CD4-positive, alpha-beta memory T cell (primary cell): ENCODE measurements at regions of chr10 and their contacts with region 1.

Region 1: DNA sequence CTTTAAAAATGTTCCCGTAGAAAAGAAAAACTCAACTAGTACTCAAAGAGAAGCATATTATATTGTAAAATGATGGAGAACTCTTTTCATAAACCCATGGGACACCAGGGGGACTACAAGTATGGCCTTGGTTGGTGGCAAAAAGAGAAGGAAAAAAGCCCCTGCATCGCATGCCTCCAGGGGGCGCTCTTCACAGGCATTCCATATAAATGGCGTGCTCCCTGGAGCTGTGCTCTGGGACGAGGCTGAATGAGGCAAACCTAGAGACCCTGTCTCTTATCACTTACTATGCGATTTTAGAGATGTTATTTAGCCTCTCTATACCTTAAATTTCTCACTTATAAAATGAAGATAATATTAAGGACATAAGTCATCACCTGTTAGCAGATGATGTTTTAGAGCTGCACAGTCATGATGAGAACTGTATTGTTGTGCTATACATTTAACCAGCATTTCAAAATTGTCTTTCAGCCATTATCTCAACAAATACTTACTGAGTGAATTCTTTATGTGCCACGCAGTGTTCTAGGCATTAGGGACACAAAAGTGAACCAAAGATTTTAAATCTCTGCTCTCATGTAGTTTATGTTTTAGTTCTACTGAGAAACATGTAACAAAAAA is 105.8 kb downstream of the ARHGAP21 start:
- DNase-seq: peak; percentile 32 to 47 (median 39)
- H3K4me3 ChIP-seq: no peak overlapping the region
- H3K4me3 Mint-ChIP-seq: no peak overlapping the region
- H3K27ac ChIP-seq: no peak overlapping the region
- H3K27ac Mint-ChIP-seq: peak overlapping the region in 2 of 7 donors; percentile 5 to 47
- H3K4me1 ChIP-seq: peaks cover 13% of the 10 kb centered on the region
- H3K4me1 Mint-ChIP-seq: peaks cover 16 to 31% (median 23%) of the 10 kb centered on the region in 4 donors
- H3K27me3 ChIP-seq: no peaks in the 10 kb centered on the region
- H3K27me3 Mint-ChIP-seq: no peaks in the 10 kb centered on the region

Region 2: GRCh38 chr10:24597426-24597825 is 20.5 kb before region 1 on chr10:
- CTCF ChIA-PET with region 1: interaction called, 16 read pairs
- POLR2A ChIA-PET with region 1: no interaction called
- intact Hi-C with region 1: no loop called
- DNase-seq: no peak
- H3K4me3 ChIP-seq: no peak overlapping the region
- H3K4me3 Mint-ChIP-seq: no peak overlapping the region
- H3K27ac ChIP-seq: no peak overlapping the region
- H3K27ac Mint-ChIP-seq: no peak overlapping the region
- H3K4me1 ChIP-seq: no peaks in the 10 kb centered on the region
- H3K4me1 Mint-ChIP-seq: peaks cover 2 to 5% (median 3%) of the 10 kb centered on the region in 4 donors
- H3K27me3 ChIP-seq: no peaks in the 10 kb centered on the region
- H3K27me3 Mint-ChIP-seq: no peaks in the 10 kb centered on the region

Region 3: GRCh38 chr10:24603333-24603732 is 14.5 kb before region 1 on chr10:
- CTCF ChIA-PET with region 1: interaction called, 22 read pairs
- POLR2A ChIA-PET with region 1: interaction called, 3 read pairs
- intact Hi-C with region 1: no loop called
- DNase-seq: no peak
- H3K4me3 ChIP-seq: no peak overlapping the region
- H3K4me3 Mint-ChIP-seq: no peak overlapping the region
- H3K27ac ChIP-seq: no peak overlapping the region
- H3K27ac Mint-ChIP-seq: peak overlapping the region in 2 of 7 donors; percentile 39 to 60
- H3K4me1 ChIP-seq: no peaks in the 10 kb centered on the region
- H3K4me1 Mint-ChIP-seq: peaks cover 2 to 8% (median 4%) of the 10 kb centered on the region in 4 donors
- H3K27me3 ChIP-seq: no peaks in the 10 kb centered on the region
- H3K27me3 Mint-ChIP-seq: no peaks in the 10 kb centered on the region

Region 4: GRCh38 chr10:25080880-25081581 is 463.1 kb after region 1 on chr10:
- CTCF ChIA-PET with region 1: interaction called, 70 read pairs
- POLR2A ChIA-PET with region 1: no interaction called
- intact Hi-C with region 1: loop called (anchors 1 kb)
- DNase-seq: peak in 4 of 5 donors; percentile 40 to 58 (median 48)
- H3K4me3 ChIP-seq: no peak overlapping the region
- H3K4me3 Mint-ChIP-seq: no peak overlapping the region
- H3K27ac ChIP-seq: no peak overlapping the region
- H3K27ac Mint-ChIP-seq: peak overlapping the region in 3 of 7 donors; percentile 1 to 54 (median 30)
- H3K4me1 ChIP-seq: no peaks in the 10 kb centered on the region
- H3K4me1 Mint-ChIP-seq: peaks cover 0 to 10% (median 4%) of the 10 kb centered on the region in 4 donors
- H3K27me3 ChIP-seq: no peaks in the 10 kb centered on the region
- H3K27me3 Mint-ChIP-seq: peaks cover 2 to 10% of the 10 kb centered on the region in 2 donors